ENCODE measurements at regions of chr1 and their contacts with region 1.

Region 1: GRCh38 chr1:222892137-222892769 is 77.4 kb downstream of the DISP1 start:
- DNase-seq: no peak
- ATAC-seq: peak; percentile 82 to 84
- H3K4me3 ChIP-seq: peak overlapping the region in 3 of 4 donors; percentile 1 to 18 (median 18)
- H3K27ac ChIP-seq: peak overlapping the region; percentile 56 to 72 (median 66)
- H3K4me1 ChIP-seq: peaks cover 16 to 25% of the 10 kb centered on the region in 2 donors
- H3K27me3 ChIP-seq: no peaks in the 10 kb centered on the region
- CTCF ChIP-seq: no peak
- POLR2A ChIP-seq: no peak

Region 2: GRCh38 chr1:222928212-222928611 is 36.0 kb after region 1 on chr1:
- in situ Hi-C with region 1: no loop called
- intact Hi-C with region 1: loop called (anchors 5 kb)
- DNase-seq: peak; percentile 64 to 80
- ATAC-seq: peak; percentile 94 to 95
- H3K4me3 ChIP-seq: peak overlapping the region; percentile 35 to 42 (median 38)
- H3K27ac ChIP-seq: peak overlapping the region; percentile 4 to 72 (median 65)
- H3K4me1 ChIP-seq: peaks cover 13 to 36% of the 10 kb centered on the region in 2 donors
- H3K27me3 ChIP-seq: no peaks in the 10 kb centered on the region
- CTCF ChIP-seq: peak in 1 of 5 experiments; percentile 23
- POLR2A ChIP-seq: peak in 1 of 2 donors; percentile 32

Region 3: GRCh38 chr1:223363856-223364684 is 471.8 kb after region 1 on chr1 and contains the start of gene SUSD4:
- in situ Hi-C with region 1: no loop called
- intact Hi-C with region 1: no loop called
- DNase-seq: no peak
- ATAC-seq: peak; percentile 81 to 82
- H3K4me3 ChIP-seq: peak within 1 kb of the TSS; percentile 55 to 60 (median 58)
- H3K27ac ChIP-seq: peak within 1 kb of the TSS in 1 of 4 donors; percentile 14
- H3K4me1 ChIP-seq: peaks cover 6 to 16% of the 10 kb centered on the region in 2 donors
- H3K27me3 ChIP-seq: peaks cover 0 to 4% (median 0%) of the 10 kb centered on the region in 3 donors
- CTCF ChIP-seq: peak in 1 of 5 experiments; percentile 9
- POLR2A ChIP-seq: peak in 1 of 2 donors; percentile 19
- total RNA-seq, gene SUSD4: 1.2 to 4.0 (median 3.3) TPM in 3 of 4 donors, not detected in the other

Measured in gastrocnemius medialis (tissue), 4 donors.